Naive thymus-derived CD4-positive, alpha-beta T cell (primary cell): ENCODE measurements at regions of chr2 and their contacts with region 1.

Region 1: GRCh38 chr2:241508240-241509154 is at the start of gene STK25:
- DNase-seq: peak; percentile 93 to 98 (median 97)
- ATAC-seq: peak; percentile 96
- H3K4me3 ChIP-seq: peak within 1 kb of the TSS; percentile 70
- H3K4me3 Mint-ChIP-seq: peak within 1 kb of the TSS; percentile 80 to 92 (median 86)
- H3K27ac ChIP-seq: peak within 1 kb of the TSS; percentile 81
- H3K27ac Mint-ChIP-seq: peak within 1 kb of the TSS; percentile 67 to 91 (median 85)
- H3K4me1 ChIP-seq: peaks cover 7 to 16% of the 10 kb centered on the region in 2 donors
- H3K4me1 Mint-ChIP-seq: peaks cover 17 to 33% (median 24%) of the 10 kb centered on the region in 7 donors
- H3K27me3 ChIP-seq: no peaks in the 10 kb centered on the region
- H3K27me3 Mint-ChIP-seq: peaks cover 0 to 1% (median 0%) of the 10 kb centered on the region in 5 donors
- total RNA-seq, gene STK25: 90.8 to 170 (median 115) TPM

Region 2: DNA sequence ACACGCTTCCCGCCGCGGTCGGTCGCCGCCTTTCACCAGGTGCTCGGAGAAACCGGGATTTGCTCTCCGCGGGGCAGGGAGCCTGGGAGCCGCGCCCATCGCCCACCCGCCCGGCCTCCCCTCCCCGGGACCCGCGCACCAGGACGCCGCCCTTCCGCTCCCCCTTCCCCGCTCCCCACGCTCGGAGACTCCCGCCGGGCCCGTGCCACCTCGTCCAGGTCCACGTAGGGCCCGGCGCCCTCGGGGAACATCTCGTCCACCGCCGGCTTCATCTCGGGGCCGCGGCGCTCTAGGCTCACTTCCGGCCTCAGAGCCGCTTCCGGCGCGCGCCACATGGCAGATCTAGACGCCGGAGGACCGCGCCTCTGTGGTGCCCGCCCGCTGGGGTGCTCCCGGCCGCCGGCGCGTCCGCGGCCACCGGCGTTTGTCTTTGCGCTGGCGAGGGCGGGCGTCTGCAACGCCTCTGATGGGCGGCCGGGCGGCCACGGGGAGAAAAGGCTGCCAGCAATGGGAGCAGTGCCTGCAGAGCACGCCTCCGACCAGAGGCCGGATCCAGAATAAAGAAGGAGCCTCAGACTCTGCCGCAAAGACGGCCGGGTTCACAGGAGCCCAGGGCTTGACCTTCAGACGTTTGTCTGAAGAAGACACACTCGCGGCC is 1372.4 kb before region 1 on chr2 and contains the start of gene COPS9:
- CTCF ChIA-PET with region 1: no interaction called
- POLR2A ChIA-PET with region 1: no interaction called
- intact Hi-C with region 1: no loop called
- DNase-seq: peak; percentile 74 to 89 (median 82)
- ATAC-seq: peak; percentile 98
- H3K4me3 ChIP-seq: peak within 1 kb of the TSS; percentile 95
- H3K4me3 Mint-ChIP-seq: peak within 1 kb of the TSS; percentile 79 to 97 (median 93)
- H3K27ac ChIP-seq: peak within 1 kb of the TSS; percentile 75
- H3K27ac Mint-ChIP-seq: peak within 1 kb of the TSS; percentile 78 to 95 (median 90)
- H3K4me1 ChIP-seq: peaks cover 17 to 18% of the 10 kb centered on the region in 2 donors
- H3K4me1 Mint-ChIP-seq: peaks cover 21 to 32% (median 28%) of the 10 kb centered on the region in 7 donors
- H3K27me3 ChIP-seq: no peaks in the 10 kb centered on the region
- H3K27me3 Mint-ChIP-seq: peaks cover 0 to 4% (median 0%) of the 10 kb centered on the region in 5 donors
- total RNA-seq, gene COPS9: 53.7 to 106 (median 71.8) TPM

Region 3: GRCh38 chr2:240586198-240586918 is 922.1 kb before region 1 on chr2 and contains the start of gene CAPN10:
- CTCF ChIA-PET with region 1: no interaction called
- POLR2A ChIA-PET with region 1: no interaction called
- intact Hi-C with region 1: loop called in 1 of 2 experiments (anchors 1 kb)
- DNase-seq: peak; percentile 93 to 98 (median 97)
- ATAC-seq: peak; percentile 92
- H3K4me3 ChIP-seq: peak within 1 kb of the TSS; percentile 89
- H3K4me3 Mint-ChIP-seq: peak within 1 kb of the TSS; percentile 82 to 97 (median 94)
- H3K27ac ChIP-seq: peak within 1 kb of the TSS; percentile 94
- H3K27ac Mint-ChIP-seq: peak within 1 kb of the TSS; percentile 90 to 97 (median 92)
- H3K4me1 ChIP-seq: peaks cover 30 to 33% of the 10 kb centered on the region in 2 donors
- H3K4me1 Mint-ChIP-seq: peaks cover 31 to 69% (median 56%) of the 10 kb centered on the region in 7 donors
- H3K27me3 ChIP-seq: no peaks in the 10 kb centered on the region
- H3K27me3 Mint-ChIP-seq: no peaks in the 10 kb centered on the region
- total RNA-seq, gene CAPN10: 54.1 to 74.8 (median 64.5) TPM

Region 4: GRCh38 chr2:241110607-241111439 is 397.7 kb before region 1 on chr2:
- CTCF ChIA-PET with region 1: interaction called, 6 read pairs
- POLR2A ChIA-PET with region 1: no interaction called
- intact Hi-C with region 1: loop called in 1 of 2 experiments (anchors 2 kb)
- DNase-seq: no peak
- ATAC-seq: peak; percentile 17
- H3K4me3 ChIP-seq: peak overlapping the region; percentile 56
- H3K4me3 Mint-ChIP-seq: peak overlapping the region; percentile 68 to 89 (median 82)
- H3K27ac ChIP-seq: peak overlapping the region; percentile 70
- H3K27ac Mint-ChIP-seq: peak overlapping the region; percentile 81 to 99 (median 98)
- H3K4me1 ChIP-seq: peaks cover 36 to 42% of the 10 kb centered on the region in 2 donors
- H3K4me1 Mint-ChIP-seq: peaks cover 22 to 64% (median 63%) of the 10 kb centered on the region in 7 donors
- H3K27me3 ChIP-seq: no peaks in the 10 kb centered on the region
- H3K27me3 Mint-ChIP-seq: no peaks in the 10 kb centered on the region

Region 5: DNA sequence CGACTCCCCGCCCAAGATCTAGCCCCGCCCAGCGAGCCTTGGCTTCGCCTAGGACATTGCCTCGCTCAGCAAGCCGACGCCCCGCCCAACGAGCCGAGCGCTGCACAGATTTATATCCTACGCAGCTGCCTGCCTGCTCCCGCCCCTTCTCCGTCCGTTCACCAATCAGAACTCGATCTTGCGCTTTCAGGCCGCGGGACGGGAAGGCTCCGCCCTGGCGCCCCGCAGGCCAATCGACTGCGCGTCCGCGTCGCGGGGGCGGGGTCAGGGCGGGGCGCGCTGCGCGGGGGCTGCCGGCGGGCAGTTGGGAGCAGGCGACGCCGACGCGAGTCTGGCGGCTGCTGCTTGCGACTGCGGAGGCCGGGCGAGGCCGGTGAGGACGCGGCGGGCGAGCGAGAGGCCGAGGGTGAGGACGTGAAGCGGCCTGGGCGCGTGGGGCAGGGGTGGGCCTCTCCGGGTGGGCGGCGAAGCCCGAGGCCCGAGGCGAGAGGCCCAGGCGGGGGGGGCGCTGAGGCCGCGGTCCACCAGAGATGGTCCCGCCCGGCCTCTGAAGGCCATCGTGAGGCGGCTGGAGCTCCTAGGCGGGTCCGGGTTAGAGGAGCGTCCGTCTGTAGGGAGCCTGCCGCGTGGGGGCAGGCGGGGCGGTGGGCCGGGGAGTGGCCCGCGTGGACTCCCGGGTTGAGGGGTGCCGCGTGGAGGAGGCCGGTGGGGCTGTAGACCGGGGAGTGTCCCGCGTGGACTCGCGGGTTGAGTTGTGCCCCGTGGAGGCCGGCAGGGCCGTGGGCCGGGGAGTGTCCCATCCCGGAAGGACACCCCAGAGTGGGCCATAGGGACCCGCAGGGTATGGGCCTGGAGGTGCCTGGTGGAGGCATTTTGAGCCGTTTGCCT is 152.3 kb before region 1 on chr2 and contains the start of gene FARP2:
- CTCF ChIA-PET with region 1: no interaction called
- POLR2A ChIA-PET with region 1: no interaction called
- intact Hi-C with region 1: loop called (anchors 1 kb)
- DNase-seq: peak; percentile 91 to 99 (median 97)
- ATAC-seq: peak; percentile 93
- H3K4me3 ChIP-seq: peak within 1 kb of the TSS; percentile 54
- H3K4me3 Mint-ChIP-seq: peak within 1 kb of the TSS; percentile 75 to 92 (median 85)
- H3K27ac ChIP-seq: peak within 1 kb of the TSS; percentile 72
- H3K27ac Mint-ChIP-seq: peak within 1 kb of the TSS in 8 of 9 donors; percentile 80 to 95 (median 90)
- H3K4me1 ChIP-seq: peaks cover 6 to 7% of the 10 kb centered on the region in 2 donors
- H3K4me1 Mint-ChIP-seq: peaks cover 5 to 34% (median 19%) of the 10 kb centered on the region in 7 donors
- H3K27me3 ChIP-seq: no peaks in the 10 kb centered on the region
- H3K27me3 Mint-ChIP-seq: no peaks in the 10 kb centered on the region
- total RNA-seq, gene FARP2: 12.4 to 31.0 (median 22.1) TPM

Region 6: GRCh38 chr2:241546771-241547498 is 38.4 kb after region 1 on chr2:
- CTCF ChIA-PET with region 1: no interaction called
- POLR2A ChIA-PET with region 1: no interaction called
- intact Hi-C with region 1: no loop called
- DNase-seq: no peak
- ATAC-seq: no peak
- H3K4me3 ChIP-seq: no peak overlapping the region
- H3K4me3 Mint-ChIP-seq: no peak overlapping the region
- H3K27ac ChIP-seq: no peak overlapping the region
- H3K27ac Mint-ChIP-seq: no peak overlapping the region
- H3K4me1 ChIP-seq: no peaks in the 10 kb centered on the region
- H3K4me1 Mint-ChIP-seq: peaks cover 0 to 3% (median 0%) of the 10 kb centered on the region in 7 donors
- H3K27me3 ChIP-seq: peaks cover 3% of the 10 kb centered on the region in 2 donors
- H3K27me3 Mint-ChIP-seq: peaks cover 12 to 23% (median 22%) of the 10 kb centered on the region in 5 donors

Region 7: GRCh38 chr2:241609859-241610793 is 101.6 kb after region 1 on chr2:
- CTCF ChIA-PET with region 1: no interaction called
- POLR2A ChIA-PET with region 1: no interaction called
- intact Hi-C with region 1: loop called (anchors 1 kb)
- DNase-seq: peak; percentile 87 to 92 (median 90)
- ATAC-seq: peak; percentile 99
- H3K4me3 ChIP-seq: peak overlapping the region; percentile 53
- H3K4me3 Mint-ChIP-seq: peak overlapping the region in 9 of 10 donors; percentile 61 to 79 (median 71)
- H3K27ac ChIP-seq: peak overlapping the region; percentile 61
- H3K27ac Mint-ChIP-seq: peak overlapping the region; percentile 9 to 95 (median 68)
- H3K4me1 ChIP-seq: peaks cover 14 to 17% of the 10 kb centered on the region in 2 donors
- H3K4me1 Mint-ChIP-seq: peaks cover 16 to 33% (median 24%) of the 10 kb centered on the region in 7 donors
- H3K27me3 ChIP-seq: no peaks in the 10 kb centered on the region
- H3K27me3 Mint-ChIP-seq: no peaks in the 10 kb centered on the region

Region 8: DNA sequence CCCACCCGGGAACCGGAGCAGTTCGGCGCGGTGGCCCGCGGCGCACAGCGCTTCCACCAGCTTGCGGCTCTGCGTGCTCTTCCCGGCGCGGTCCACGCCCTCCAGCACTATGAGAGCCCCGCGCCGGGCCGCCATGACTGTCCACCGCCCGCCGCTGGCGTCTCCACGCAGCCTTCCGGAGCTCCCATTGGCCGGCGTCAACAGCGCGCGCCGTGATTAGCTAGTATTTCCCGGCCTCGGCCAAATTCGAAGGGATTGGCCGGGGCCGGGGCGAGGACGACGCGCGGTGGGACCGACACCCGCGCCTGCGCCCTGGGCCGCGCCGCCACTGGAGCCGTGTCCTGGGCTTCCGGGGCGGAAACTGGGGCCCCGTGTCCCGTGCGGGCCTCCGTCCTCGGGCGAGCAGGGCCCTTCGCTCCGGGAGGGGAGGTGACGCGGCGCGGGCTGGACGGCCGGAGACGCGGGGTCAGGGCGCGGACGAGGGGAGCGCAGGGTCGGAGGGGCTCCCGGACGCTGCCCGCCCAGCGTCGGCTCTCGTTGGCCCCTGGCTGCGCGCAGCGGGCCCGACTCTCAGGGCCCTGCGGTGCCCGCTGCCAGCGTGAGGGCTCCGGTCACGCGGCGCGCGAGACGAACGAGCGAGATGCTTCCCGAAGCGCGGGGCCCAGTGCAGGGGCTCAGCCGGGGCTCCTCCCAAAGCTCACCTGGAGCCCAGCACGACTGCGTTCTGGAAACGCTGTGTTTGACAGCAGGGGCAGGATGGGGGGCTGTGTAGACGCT is 178.3 kb after region 1 on chr2 and contains the start of gene DTYMK:
- CTCF ChIA-PET with region 1: no interaction called
- POLR2A ChIA-PET with region 1: no interaction called
- intact Hi-C with region 1: loop called (anchors 1 kb)
- DNase-seq: peak; percentile 92 to 98 (median 97)
- ATAC-seq: peak; percentile 97
- H3K4me3 ChIP-seq: peak within 1 kb of the TSS; percentile 91
- H3K4me3 Mint-ChIP-seq: peak within 1 kb of the TSS; percentile 84 to 98 (median 95)
- H3K27ac ChIP-seq: peak within 1 kb of the TSS; percentile 81
- H3K27ac Mint-ChIP-seq: peak within 1 kb of the TSS; percentile 74 to 96 (median 88)
- H3K4me1 ChIP-seq: peaks cover 8 to 18% of the 10 kb centered on the region in 2 donors
- H3K4me1 Mint-ChIP-seq: peaks cover 4 to 40% (median 31%) of the 10 kb centered on the region in 7 donors
- H3K27me3 ChIP-seq: no peaks in the 10 kb centered on the region
- H3K27me3 Mint-ChIP-seq: no peaks in the 10 kb centered on the region
- total RNA-seq, gene DTYMK: 12.0 to 65.7 (median 17.0) TPM